ENCODE measurements at regions of chr17 and their contacts with region 1.

Region 1: GRCh38 chr17:68468334-68468733 is 11.0 kb upstream of the WIPI1 start:
- DNase-seq: peak in 1 of 2 donors; percentile 51
- ATAC-seq: peak; percentile 68 to 92 (median 86)
- H3K4me3 ChIP-seq: no peak overlapping the region
- H3K27ac ChIP-seq: peak overlapping the region; percentile 33 to 94 (median 84)
- H3K4me1 ChIP-seq: peaks cover 0 to 34% (median 8%) of the 10 kb centered on the region in 9 donors
- H3K27me3 ChIP-seq: no peaks in the 10 kb centered on the region
- CTCF ChIP-seq: no peak

Region 2: GRCh38 chr17:68424942-68425386 is 43.4 kb before region 1 on chr17:
- intact Hi-C with region 1: no loop called
- DNase-seq: no peak
- ATAC-seq: no peak
- H3K4me3 ChIP-seq: no peak overlapping the region
- H3K27ac ChIP-seq: no peak overlapping the region
- H3K4me1 ChIP-seq: no peaks in the 10 kb centered on the region
- H3K27me3 ChIP-seq: no peaks in the 10 kb centered on the region
- CTCF ChIP-seq: no peak

Region 3: DNA sequence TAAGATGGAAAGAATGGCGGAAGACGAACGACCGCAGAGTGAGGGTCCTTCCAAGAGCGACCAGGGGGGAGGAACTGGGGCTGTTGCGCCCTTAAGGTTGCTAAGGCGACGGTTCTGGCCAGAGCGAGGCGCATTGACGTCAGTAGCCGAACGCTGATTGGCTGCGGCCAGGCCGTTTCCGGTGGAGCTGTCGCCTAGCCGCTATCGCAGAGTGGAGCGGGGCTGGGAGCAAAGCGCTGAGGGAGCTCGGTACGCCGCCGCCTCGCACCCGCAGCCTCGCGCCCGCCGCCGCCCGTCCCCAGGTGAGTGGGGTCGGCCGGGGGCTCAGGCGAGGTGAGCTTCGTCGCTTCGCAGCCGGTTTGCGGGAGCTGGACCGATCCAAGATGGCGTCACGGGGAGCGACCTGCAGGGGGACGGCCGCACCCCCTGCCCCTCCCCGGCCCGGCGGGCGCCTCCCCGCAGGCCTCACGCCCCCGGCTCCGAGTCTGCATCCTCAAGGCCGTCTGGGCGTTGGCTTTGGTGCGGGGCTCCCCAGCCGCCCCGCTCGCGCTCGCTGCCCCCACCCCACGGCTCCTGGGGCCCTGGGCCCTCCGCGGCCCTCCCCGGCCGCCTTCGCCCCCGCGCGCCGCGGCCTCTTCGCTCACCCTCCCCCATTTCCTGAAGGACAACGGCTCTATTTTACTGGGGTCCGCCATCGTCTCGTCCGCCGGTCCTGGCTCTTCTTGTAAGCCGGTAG is 44.1 kb after region 1 on chr17 and contains the start of gene PRKAR1A:
- intact Hi-C with region 1: loop called in 7 of 10 experiments (anchors 1 to 5 kb)
- DNase-seq: peak; percentile 94 to 96
- ATAC-seq: peak; percentile 91 to 96 (median 94)
- H3K4me3 ChIP-seq: peak within 1 kb of the TSS; percentile 65 to 90 (median 84)
- H3K27ac ChIP-seq: peak within 1 kb of the TSS; percentile 94 to 100 (median 99)
- H3K4me1 ChIP-seq: peaks cover 5 to 78% (median 55%) of the 10 kb centered on the region in 9 donors
- H3K27me3 ChIP-seq: no peaks in the 10 kb centered on the region
- CTCF ChIP-seq: peak in 3 of 9 donors; percentile 4 to 25 (median 11)
- total RNA-seq, gene PRKAR1A: 609 to 1,378 (median 974) TPM

Region 4: GRCh38 chr17:68519911-68520310 is 51.6 kb after region 1 on chr17:
- intact Hi-C with region 1: loop called in 1 of 10 experiments (anchors 5 kb)
- DNase-seq: peak in 1 of 2 donors; percentile 41
- ATAC-seq: peak; percentile 62 to 93 (median 82)
- H3K4me3 ChIP-seq: no peak overlapping the region
- H3K27ac ChIP-seq: peak overlapping the region; percentile 12 to 72 (median 57)
- H3K4me1 ChIP-seq: peaks cover 0 to 99% (median 68%) of the 10 kb centered on the region in 9 donors
- H3K27me3 ChIP-seq: no peaks in the 10 kb centered on the region
- CTCF ChIP-seq: no peak

Measured in heart right ventricle (tissue), 16 donors.